Endothelial cell of umbilical vein (primary cell): ENCODE measurements at regions of chr4 and their contacts with region 1.

Region 1: GRCh38 chr4:123986268-123986798 is 589.7 kb downstream of the SPRY1 start:
- DNase-seq: peak; percentile 99
- H3K4me3 ChIP-seq: no peak overlapping the region
- H3K27ac ChIP-seq: peak overlapping the region; percentile 98
- H3K4me1 ChIP-seq: peaks cover 41% of the 10 kb centered on the region
- H3K27me3 ChIP-seq: no peaks in the 10 kb centered on the region
- CTCF ChIP-seq: no peak
- POLR2A ChIP-seq: no peak

Region 2: DNA sequence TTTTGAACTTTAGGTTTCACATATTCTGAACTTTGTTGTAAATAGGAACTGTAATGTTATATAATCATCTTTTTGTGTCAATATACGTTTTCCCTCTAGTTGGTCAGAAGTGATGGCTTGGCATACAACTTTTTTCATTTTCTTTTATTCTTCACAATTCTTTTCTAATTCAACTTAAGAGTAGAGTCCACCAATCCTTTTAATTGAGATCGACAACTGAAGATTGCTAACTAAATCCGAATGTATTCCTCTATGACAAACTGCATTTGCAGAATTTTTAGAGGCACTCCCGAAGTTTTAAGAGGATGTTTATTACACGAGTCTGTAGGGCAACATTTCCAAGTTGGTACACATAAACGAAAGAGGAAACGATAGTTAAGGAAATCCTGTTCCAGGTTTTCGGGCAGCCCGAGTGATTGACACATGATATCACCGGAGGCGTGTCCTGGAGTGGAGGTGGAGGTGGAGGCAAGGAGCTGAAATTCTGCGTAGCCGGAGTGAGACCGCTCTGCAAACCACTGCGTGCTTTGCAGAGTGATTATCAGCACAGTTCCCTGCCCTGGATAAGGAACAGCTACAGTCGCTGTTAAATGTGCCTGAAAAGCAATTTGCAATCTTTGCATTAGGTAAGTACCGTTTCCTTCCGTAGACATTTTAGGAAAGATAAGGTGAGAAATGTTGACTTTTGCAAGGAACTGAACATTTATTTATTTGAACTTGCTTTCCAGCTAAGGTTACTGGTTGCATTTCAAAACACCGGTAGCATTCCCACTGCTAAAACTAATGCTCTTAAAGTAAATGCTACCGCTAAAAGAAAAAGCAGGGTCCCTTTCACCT is 589.8 kb before region 1 on chr4 and contains the start of gene SPRY1:
- CTCF ChIA-PET with region 1: no interaction called
- POLR2A ChIA-PET with region 1: no interaction called
- dilution Hi-C with region 1: no loop called
- intact Hi-C with region 1: loop called (anchors 1 kb)
- DNase-seq: peak; percentile 89
- H3K4me3 ChIP-seq: peak within 1 kb of the TSS; percentile 27 to 84 (median 49)
- H3K27ac ChIP-seq: peak within 1 kb of the TSS; percentile 53
- H3K4me1 ChIP-seq: peaks cover 15% of the 10 kb centered on the region
- H3K27me3 ChIP-seq: no peaks in the 10 kb centered on the region
- CTCF ChIP-seq: no peak
- POLR2A ChIP-seq: peak; percentile 68
- total RNA-seq, gene SPRY1: 43.7 and 59.6 TPM in 2 replicates

Region 3: GRCh38 chr4:123699880-123700771 is 286.2 kb before region 1 on chr4:
- CTCF ChIA-PET with region 1: no interaction called
- POLR2A ChIA-PET with region 1: no interaction called
- dilution Hi-C with region 1: no loop called
- intact Hi-C with region 1: loop called (anchors 2 kb)
- DNase-seq: peak; percentile 84
- H3K4me3 ChIP-seq: no peak overlapping the region
- H3K27ac ChIP-seq: peak overlapping the region; percentile 5
- H3K4me1 ChIP-seq: peaks cover 16% of the 10 kb centered on the region
- H3K27me3 ChIP-seq: no peaks in the 10 kb centered on the region
- CTCF ChIP-seq: no peak
- POLR2A ChIP-seq: no peak

Region 4: DNA sequence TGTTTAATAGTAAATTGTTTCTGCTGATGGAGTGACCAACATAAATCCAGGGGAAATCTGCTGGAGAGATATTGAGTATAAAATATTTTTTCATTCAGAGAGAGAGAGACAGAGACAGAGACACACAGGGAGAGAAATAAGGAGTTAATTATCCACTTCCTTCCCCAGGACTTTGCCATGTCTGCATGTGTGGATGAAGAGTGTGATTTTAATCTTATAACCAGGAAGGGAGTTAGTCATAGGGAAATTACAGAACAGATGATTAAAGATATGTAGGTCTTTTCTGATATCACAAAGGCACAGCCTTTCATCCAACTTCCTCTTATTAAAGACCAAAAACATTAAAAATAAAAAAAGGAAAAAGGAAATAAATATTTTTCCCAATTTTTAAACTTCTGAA is 63.5 kb before region 1 on chr4:
- CTCF ChIA-PET with region 1: no interaction called
- POLR2A ChIA-PET with region 1: interaction called, 3 read pairs
- dilution Hi-C with region 1: no loop called
- intact Hi-C with region 1: loop called (anchors 1 kb)
- DNase-seq: peak; percentile 91
- H3K4me3 ChIP-seq: no peak overlapping the region
- H3K27ac ChIP-seq: peak overlapping the region; percentile 93
- H3K4me1 ChIP-seq: peaks cover 20% of the 10 kb centered on the region
- H3K27me3 ChIP-seq: no peaks in the 10 kb centered on the region
- CTCF ChIP-seq: no peak
- POLR2A ChIP-seq: peak; percentile 78

Region 5: DNA sequence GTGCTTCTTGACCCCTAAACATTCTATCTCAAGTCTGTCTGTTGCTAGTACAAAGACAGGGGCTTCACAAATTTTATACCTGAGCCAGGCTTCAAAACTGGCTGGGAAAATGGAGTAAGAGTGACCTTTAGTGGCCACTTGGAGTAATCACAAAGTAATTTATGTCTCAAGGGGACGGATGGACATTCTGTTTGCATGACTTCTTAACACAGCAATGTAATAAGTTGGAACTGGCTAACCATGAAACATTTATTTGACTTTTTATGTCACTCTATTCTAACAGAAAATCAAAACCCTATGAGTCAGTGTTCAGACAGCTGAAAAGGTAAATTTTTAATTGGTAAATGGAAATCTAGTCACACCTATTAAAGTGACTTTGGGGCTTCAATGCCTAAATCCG is 125.6 kb after region 1 on chr4:
- CTCF ChIA-PET with region 1: no interaction called
- POLR2A ChIA-PET with region 1: no interaction called
- dilution Hi-C with region 1: no loop called
- intact Hi-C with region 1: loop called (anchors 1 kb)
- DNase-seq: peak; percentile 84
- H3K4me3 ChIP-seq: no peak overlapping the region
- H3K27ac ChIP-seq: peak overlapping the region; percentile 5
- H3K4me1 ChIP-seq: peaks cover 9% of the 10 kb centered on the region
- H3K27me3 ChIP-seq: no peaks in the 10 kb centered on the region
- CTCF ChIP-seq: peak; percentile 42 to 49
- POLR2A ChIP-seq: no peak